GM10248 (cell line): ENCODE measurements at regions of chr17 and their contacts with region 1.

Region 1: DNA sequence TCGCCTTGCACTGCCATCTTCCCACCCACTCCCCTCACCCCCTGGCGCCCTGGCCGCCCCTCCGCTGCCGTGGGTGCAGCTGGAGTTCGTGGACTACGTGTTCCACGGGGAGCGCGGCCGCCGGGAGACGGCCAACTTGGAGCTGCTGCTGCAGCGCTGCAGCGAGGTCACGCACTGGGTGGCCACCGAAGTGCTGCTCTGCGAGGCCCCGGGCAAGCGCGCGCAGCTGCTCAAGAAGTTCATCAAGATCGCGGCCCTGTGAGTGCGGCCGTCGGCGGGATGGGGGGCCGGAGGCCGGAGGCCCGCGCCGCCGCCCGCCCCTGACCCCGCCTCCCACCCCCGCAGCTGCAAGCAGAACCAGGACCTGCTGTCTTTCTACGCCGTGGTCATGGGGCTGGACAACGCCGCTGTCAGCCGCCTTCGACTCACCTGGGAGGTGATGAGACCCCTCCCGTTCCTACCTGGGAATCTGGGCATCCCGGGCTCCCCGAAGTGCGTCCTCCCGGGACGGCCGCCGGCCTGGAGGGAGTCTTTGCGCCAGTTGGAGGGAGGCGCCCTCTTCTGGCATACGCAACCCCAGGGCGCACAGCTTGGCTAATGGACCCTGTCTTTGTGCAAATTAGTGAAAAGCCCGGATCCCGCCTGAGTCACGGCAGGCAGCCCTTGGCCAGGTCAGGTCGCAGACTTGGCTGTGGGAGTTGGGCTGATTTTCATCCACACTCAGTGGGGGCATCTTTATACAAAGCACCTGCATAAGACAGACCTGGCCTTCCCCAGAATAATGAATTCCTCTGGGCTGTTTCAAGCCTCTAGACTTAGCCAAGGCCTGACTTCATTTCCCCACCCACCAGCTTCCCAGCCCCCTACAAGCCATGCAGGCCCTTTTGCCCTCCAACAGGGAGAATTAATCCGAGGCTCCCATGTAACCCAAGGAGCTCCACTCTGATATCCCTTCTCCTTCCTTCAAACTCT is 14.3 kb downstream of the RAPGEFL1 start:
- DNase-seq: peak; percentile 87
- CTCF ChIP-seq: peak; percentile 90

Region 2: GRCh38 chr17:39754161-39754951 is 437.2 kb before region 1 on chr17:
- CTCF ChIA-PET with region 1: no interaction called
- POLR2A ChIA-PET with region 1: no interaction called
- DNase-seq: peak; percentile 96
- CTCF ChIP-seq: peak; percentile 87

Region 3: GRCh38 chr17:40056379-40057010 is 135.0 kb before region 1 on chr17:
- CTCF ChIA-PET with region 1: no interaction called
- POLR2A ChIA-PET with region 1: no interaction called
- DNase-seq: no peak
- CTCF ChIP-seq: no peak

Region 4: DNA sequence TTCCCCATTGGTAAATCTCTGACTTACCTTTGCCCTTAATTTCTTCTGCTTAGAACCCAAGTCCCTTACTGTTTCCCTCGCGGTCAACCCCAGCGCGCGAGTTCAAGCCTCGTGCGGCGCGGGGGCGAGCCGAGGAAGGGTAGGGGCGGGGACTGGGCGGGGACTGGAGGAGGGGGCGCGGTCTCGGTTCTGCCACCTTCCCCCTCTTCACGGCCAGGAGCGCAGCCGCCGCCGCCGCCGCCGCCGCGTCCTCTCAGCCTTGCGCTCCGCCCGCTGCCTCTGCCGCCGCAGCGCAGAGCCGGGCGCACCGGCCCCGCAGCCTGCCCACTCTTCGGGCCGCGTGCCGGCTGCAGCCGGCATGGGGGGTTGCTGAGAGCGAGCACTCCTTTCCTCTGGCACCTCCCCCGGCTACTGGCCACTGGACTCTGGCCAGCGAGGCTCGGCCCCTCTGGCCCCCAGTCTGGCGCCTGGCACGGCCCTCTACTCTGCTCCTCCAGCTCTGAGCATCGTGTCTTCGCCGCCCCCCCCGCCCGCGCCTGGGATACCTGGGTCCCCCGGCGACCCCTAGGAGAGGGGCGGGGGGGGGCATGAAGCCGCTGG is 14.1 kb before region 1 on chr17 and contains the start of gene RAPGEFL1:
- CTCF ChIA-PET with region 1: interaction called, 16 read pairs
- POLR2A ChIA-PET with region 1: interaction called, 4 read pairs
- DNase-seq: peak; percentile 94
- CTCF ChIP-seq: no peak

Region 5: GRCh38 chr17:40203131-40203530 is 11.6 kb after region 1 on chr17:
- CTCF ChIA-PET with region 1: interaction called, 78 read pairs
- POLR2A ChIA-PET with region 1: interaction called, 3 read pairs
- DNase-seq: no peak
- CTCF ChIP-seq: no peak

Region 6: DNA sequence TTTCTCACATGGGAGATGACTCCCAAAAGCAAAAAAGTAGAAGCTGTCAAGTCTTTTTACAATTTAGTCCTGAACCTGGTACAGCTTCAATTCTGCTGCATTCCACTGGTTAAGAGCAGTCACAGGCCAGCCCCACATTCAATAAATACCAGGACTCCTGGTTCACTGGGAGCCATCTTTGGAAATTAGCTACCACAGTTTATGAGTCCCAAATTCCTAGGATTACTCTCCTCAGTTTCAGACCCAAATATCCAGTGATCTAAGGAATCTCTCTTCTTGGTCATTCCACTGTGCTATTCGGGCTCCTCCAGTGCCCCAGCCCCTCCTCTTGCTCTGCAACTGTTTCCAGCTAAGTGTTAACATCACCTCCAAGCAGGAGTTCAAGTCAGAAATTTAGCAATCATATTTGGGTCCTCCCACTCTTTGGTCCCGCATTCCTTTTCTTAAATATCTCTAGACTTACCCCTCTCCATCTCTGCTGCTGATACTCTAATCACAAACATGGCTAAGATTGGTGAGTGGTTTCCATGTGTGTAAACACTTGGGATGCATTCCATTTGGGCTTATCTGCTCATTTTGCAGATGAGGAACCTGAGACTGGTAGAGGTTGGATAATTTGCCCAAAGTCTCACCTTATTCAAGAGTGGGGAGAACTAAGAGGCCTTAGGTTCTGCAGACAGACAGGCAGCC is 18.0 kb after region 1 on chr17:
- CTCF ChIA-PET with region 1: interaction called, 78 read pairs
- POLR2A ChIA-PET with region 1: no interaction called
- DNase-seq: no peak
- CTCF ChIP-seq: no peak

Region 7: GRCh38 chr17:40219073-40219860 is 27.7 kb after region 1 on chr17 and contains the start of gene WIPF2:
- CTCF ChIA-PET with region 1: interaction called, 37 read pairs
- POLR2A ChIA-PET with region 1: no interaction called
- DNase-seq: peak; percentile 96
- CTCF ChIP-seq: peak; percentile 25

Region 8: GRCh38 chr17:40230670-40231069 is 39.1 kb after region 1 on chr17:
- CTCF ChIA-PET with region 1: no interaction called
- POLR2A ChIA-PET with region 1: no interaction called
- DNase-seq: no peak
- CTCF ChIP-seq: no peak

Region 9: GRCh38 chr17:40303009-40303657 is 111.6 kb after region 1 on chr17:
- CTCF ChIA-PET with region 1: interaction called, 21 read pairs
- POLR2A ChIA-PET with region 1: no interaction called
- DNase-seq: no peak
- CTCF ChIP-seq: peak; percentile 66